CD4-positive, alpha-beta memory T cell (primary cell): ENCODE measurements at regions of chr11 and their contacts with region 1.

Region 1: GRCh38 chr11:66136752-66137123 is 66.7 kb downstream of the PACS1 start:
- DNase-seq: peak in 1 of 5 donors; percentile 48
- H3K4me3 ChIP-seq: no peak overlapping the region
- H3K4me3 Mint-ChIP-seq: no peak overlapping the region
- H3K27ac ChIP-seq: no peak overlapping the region
- H3K27ac Mint-ChIP-seq: peak overlapping the region in 5 of 7 donors; percentile 32 to 81 (median 46)
- H3K4me1 ChIP-seq: peaks cover 48% of the 10 kb centered on the region
- H3K4me1 Mint-ChIP-seq: peaks cover 34 to 70% (median 54%) of the 10 kb centered on the region in 4 donors
- H3K27me3 ChIP-seq: no peaks in the 10 kb centered on the region
- H3K27me3 Mint-ChIP-seq: no peaks in the 10 kb centered on the region

Region 2: GRCh38 chr11:65988791-65989592 is 147.7 kb before region 1 on chr11:
- CTCF ChIA-PET with region 1: no interaction called
- POLR2A ChIA-PET with region 1: no interaction called
- intact Hi-C with region 1: loop called (anchors 1 kb)
- DNase-seq: peak; percentile 92 to 94 (median 93)
- H3K4me3 ChIP-seq: no peak overlapping the region
- H3K4me3 Mint-ChIP-seq: peak overlapping the region in 1 of 8 donors; percentile 3
- H3K27ac ChIP-seq: no peak overlapping the region
- H3K27ac Mint-ChIP-seq: peak overlapping the region; percentile 68 to 95 (median 86)
- H3K4me1 ChIP-seq: peaks cover 6% of the 10 kb centered on the region
- H3K4me1 Mint-ChIP-seq: peaks cover 5 to 7% (median 6%) of the 10 kb centered on the region in 4 donors
- H3K27me3 ChIP-seq: no peaks in the 10 kb centered on the region
- H3K27me3 Mint-ChIP-seq: no peaks in the 10 kb centered on the region

Region 3: GRCh38 chr11:66045177-66045639 is 91.5 kb before region 1 on chr11:
- CTCF ChIA-PET with region 1: interaction called, 39 read pairs
- POLR2A ChIA-PET with region 1: interaction called, 5 read pairs
- intact Hi-C with region 1: loop called (anchors 1 kb)
- DNase-seq: peak; percentile 78 to 86 (median 81)
- H3K4me3 ChIP-seq: no peak overlapping the region
- H3K4me3 Mint-ChIP-seq: peak overlapping the region in 2 of 8 donors; percentile 32 to 55
- H3K27ac ChIP-seq: no peak overlapping the region
- H3K27ac Mint-ChIP-seq: peak overlapping the region in 2 of 7 donors; percentile 9 to 67
- H3K4me1 ChIP-seq: peaks cover 12% of the 10 kb centered on the region
- H3K4me1 Mint-ChIP-seq: peaks cover 5 to 16% (median 9%) of the 10 kb centered on the region in 4 donors
- H3K27me3 ChIP-seq: no peaks in the 10 kb centered on the region
- H3K27me3 Mint-ChIP-seq: peaks cover 0 to 2% of the 10 kb centered on the region in 2 donors

Region 4: DNA sequence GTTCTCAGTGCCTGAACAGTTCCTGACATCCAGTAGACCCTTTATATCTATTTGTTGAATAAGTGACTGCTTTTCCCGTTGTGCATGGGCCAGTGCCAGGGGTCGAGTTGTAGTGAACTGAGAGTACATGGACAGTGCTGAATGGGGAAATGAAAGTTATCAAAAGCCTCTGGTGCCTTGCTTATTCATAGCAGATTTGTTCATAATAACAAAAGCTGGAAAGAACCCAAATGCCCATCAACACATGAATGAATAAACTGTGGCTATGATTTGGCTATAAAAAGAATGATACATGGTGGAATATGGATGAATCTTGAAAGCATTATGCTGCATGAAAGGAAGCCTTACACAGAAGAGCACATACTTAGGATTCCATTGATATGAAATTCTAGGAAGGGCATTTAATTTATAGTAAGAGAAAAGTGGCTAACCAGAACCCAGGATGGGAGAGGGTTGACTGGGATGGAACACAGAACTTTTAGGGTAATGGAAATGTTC is 24.1 kb before region 1 on chr11:
- CTCF ChIA-PET with region 1: interaction called, 26 read pairs
- POLR2A ChIA-PET with region 1: interaction called, 3 read pairs
- intact Hi-C with region 1: no loop called
- DNase-seq: no peak
- H3K4me3 ChIP-seq: no peak overlapping the region
- H3K4me3 Mint-ChIP-seq: peak overlapping the region in 7 of 8 donors; percentile 14 to 84 (median 65)
- H3K27ac ChIP-seq: peak overlapping the region; percentile 49
- H3K27ac Mint-ChIP-seq: peak overlapping the region; percentile 77 to 96 (median 90)
- H3K4me1 ChIP-seq: peaks cover 99% of the 10 kb centered on the region
- H3K4me1 Mint-ChIP-seq: peaks cover 69 to 97% (median 79%) of the 10 kb centered on the region in 4 donors
- H3K27me3 ChIP-seq: no peaks in the 10 kb centered on the region
- H3K27me3 Mint-ChIP-seq: no peaks in the 10 kb centered on the region

Region 5: GRCh38 chr11:66119348-66120133 is 17.2 kb before region 1 on chr11:
- CTCF ChIA-PET with region 1: interaction called, 26 read pairs
- POLR2A ChIA-PET with region 1: interaction called, 4 read pairs
- intact Hi-C with region 1: no loop called
- DNase-seq: no peak
- H3K4me3 ChIP-seq: no peak overlapping the region
- H3K4me3 Mint-ChIP-seq: peak overlapping the region in 5 of 8 donors; percentile 4 to 65 (median 48)
- H3K27ac ChIP-seq: no peak overlapping the region
- H3K27ac Mint-ChIP-seq: peak overlapping the region; percentile 34 to 84 (median 73)
- H3K4me1 ChIP-seq: peaks cover 90% of the 10 kb centered on the region
- H3K4me1 Mint-ChIP-seq: peaks cover 66 to 94% (median 83%) of the 10 kb centered on the region in 4 donors
- H3K27me3 ChIP-seq: no peaks in the 10 kb centered on the region
- H3K27me3 Mint-ChIP-seq: no peaks in the 10 kb centered on the region

Region 6: DNA sequence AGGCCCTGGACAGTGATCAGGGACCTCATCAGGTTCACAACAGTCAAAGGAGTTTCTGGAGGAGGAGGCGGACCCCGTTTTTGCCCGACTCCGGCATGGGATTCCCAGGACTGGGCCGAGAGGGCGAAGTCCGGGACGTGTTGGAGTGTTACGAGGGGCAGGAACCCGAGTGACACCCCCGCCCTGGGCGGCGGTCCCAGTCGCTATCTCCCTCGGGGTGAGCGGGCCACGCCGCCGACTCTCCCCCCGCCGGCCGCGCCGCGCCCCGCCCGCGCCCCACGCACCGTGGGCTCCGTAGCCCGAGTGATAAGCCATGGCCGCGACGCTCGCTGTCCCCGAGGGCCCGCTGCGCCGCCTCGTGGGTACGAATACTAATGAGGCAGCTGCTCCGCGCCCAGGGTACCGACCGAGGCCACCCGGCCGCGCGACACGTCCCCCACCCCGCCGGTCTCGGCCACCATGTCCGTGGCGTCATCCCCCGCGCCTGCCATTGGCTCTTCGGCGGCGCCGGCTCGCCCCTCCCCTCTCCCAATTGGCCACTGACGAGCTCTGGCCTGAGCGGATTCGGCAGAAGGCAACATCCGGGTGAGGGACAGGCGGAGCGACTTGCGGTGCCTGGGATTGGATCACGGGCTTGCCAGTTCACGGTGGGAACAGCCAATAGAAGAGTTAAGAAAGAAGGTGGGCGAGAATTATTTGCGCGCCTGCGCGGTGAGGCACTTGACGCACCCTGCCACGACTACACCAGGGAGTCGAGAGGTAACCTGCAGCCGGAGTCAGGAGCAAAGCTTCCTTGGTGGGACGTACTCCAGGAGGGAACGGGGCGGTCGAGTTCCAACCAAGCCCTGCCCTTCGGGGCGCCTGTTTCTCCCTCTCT is 152.2 kb after region 1 on chr11 and contains the start of gene YIF1A:
- CTCF ChIA-PET with region 1: no interaction called
- POLR2A ChIA-PET with region 1: no interaction called
- intact Hi-C with region 1: no loop called
- DNase-seq: peak; percentile 98 to 100 (median 99)
- H3K4me3 ChIP-seq: peak within 1 kb of the TSS; percentile 70 to 84
- H3K4me3 Mint-ChIP-seq: peak within 1 kb of the TSS; percentile 87 to 96 (median 92)
- H3K27ac ChIP-seq: peak within 1 kb of the TSS; percentile 88
- H3K27ac Mint-ChIP-seq: peak within 1 kb of the TSS; percentile 83 to 98 (median 96)
- H3K4me1 ChIP-seq: peaks cover 39% of the 10 kb centered on the region
- H3K4me1 Mint-ChIP-seq: peaks cover 16 to 49% (median 29%) of the 10 kb centered on the region in 4 donors
- H3K27me3 ChIP-seq: no peaks in the 10 kb centered on the region
- H3K27me3 Mint-ChIP-seq: peaks cover 10 to 14% of the 10 kb centered on the region in 2 donors
- total RNA-seq, gene YIF1A: 40.4 to 45.1 TPM